PC-9 (cell line): ENCODE measurements at regions of chr4 and their contacts with region 1.

Region 1: GRCh38 chr4:110193822-110194761 is 4.3 kb downstream of the ELOVL6 start:
- DNase-seq: no peak
- H3K4me3 ChIP-seq: no peak overlapping the region
- H3K27ac ChIP-seq: no peak overlapping the region
- H3K4me1 ChIP-seq: no peaks in the 10 kb centered on the region
- H3K27me3 ChIP-seq: no peaks in the 10 kb centered on the region
- CTCF ChIP-seq: no peak

Region 2: GRCh38 chr4:110005461-110006056 is 188.5 kb before region 1 on chr4:
- CTCF ChIA-PET with region 1: interaction called, 4 read pairs
- POLR2A ChIA-PET with region 1: no interaction called
- intact Hi-C with region 1: loop called (anchors 10 kb)
- DNase-seq: peak in 1 of 2 experiments; percentile 47
- H3K4me3 ChIP-seq: no peak overlapping the region
- H3K27ac ChIP-seq: no peak overlapping the region
- H3K4me1 ChIP-seq: no peaks in the 10 kb centered on the region
- H3K27me3 ChIP-seq: no peaks in the 10 kb centered on the region
- CTCF ChIP-seq: peak; percentile 75

Region 3: GRCh38 chr4:110049951-110050925 is 143.9 kb before region 1 on chr4:
- CTCF ChIA-PET with region 1: no interaction called
- POLR2A ChIA-PET with region 1: no interaction called
- intact Hi-C with region 1: loop called (anchors 1 kb)
- DNase-seq: peak in 1 of 2 experiments; percentile 27
- H3K4me3 ChIP-seq: no peak overlapping the region
- H3K27ac ChIP-seq: no peak overlapping the region
- H3K4me1 ChIP-seq: no peaks in the 10 kb centered on the region
- H3K27me3 ChIP-seq: no peaks in the 10 kb centered on the region
- CTCF ChIP-seq: peak; percentile 80

Region 4: GRCh38 chr4:110165382-110166285 is 28.5 kb before region 1 on chr4:
- CTCF ChIA-PET with region 1: no interaction called
- POLR2A ChIA-PET with region 1: no interaction called
- intact Hi-C with region 1: loop called (anchors 2 kb)
- DNase-seq: peak in 1 of 2 experiments; percentile 86
- H3K4me3 ChIP-seq: no peak overlapping the region
- H3K27ac ChIP-seq: peak overlapping the region; percentile 98
- H3K4me1 ChIP-seq: peaks cover 55% of the 10 kb centered on the region
- H3K27me3 ChIP-seq: no peaks in the 10 kb centered on the region
- CTCF ChIP-seq: no peak

Region 5: DNA sequence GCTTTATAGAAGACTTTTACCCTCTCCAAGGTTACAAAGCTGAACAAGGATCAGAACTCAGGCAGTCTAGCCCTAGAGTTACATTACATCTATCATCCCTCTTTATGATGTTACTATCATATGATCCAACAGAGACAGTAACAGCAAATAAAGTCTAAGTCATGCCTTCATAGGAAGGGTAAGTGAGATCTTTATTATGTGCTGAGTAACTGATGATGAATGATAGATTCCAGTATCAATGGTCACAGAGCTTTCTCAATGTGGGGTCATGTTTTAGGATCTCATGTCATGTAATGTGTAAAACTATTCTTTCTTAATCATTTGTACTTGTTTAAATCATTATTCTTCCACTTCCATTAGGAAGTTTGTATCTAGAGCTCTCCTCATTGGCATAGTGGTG is 18.5 kb before region 1 on chr4:
- CTCF ChIA-PET with region 1: no interaction called
- POLR2A ChIA-PET with region 1: no interaction called
- intact Hi-C with region 1: no loop called
- DNase-seq: no peak
- H3K4me3 ChIP-seq: no peak overlapping the region
- H3K27ac ChIP-seq: no peak overlapping the region
- H3K4me1 ChIP-seq: peaks cover 26% of the 10 kb centered on the region
- H3K27me3 ChIP-seq: no peaks in the 10 kb centered on the region
- CTCF ChIP-seq: no peak

Region 6: DNA sequence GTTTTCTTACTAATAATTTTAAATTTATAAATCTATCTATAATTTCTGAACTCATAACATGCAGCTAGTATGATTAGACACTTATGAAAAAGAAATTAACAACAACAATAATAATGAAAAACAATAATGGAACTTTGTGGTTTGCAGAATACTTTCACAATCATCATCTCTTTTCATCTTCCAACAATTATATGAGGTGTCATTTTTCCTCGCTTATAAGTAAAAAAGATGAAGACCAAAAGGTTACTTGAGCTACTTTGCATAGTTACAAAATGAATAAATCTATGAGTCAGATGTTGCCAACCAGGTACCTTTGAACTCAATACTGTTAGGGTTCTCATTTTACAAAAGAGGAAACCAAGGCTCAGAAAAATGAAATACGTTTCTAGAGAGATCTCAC is 102.8 kb after region 1 on chr4:
- CTCF ChIA-PET with region 1: no interaction called
- POLR2A ChIA-PET with region 1: no interaction called
- intact Hi-C with region 1: loop called (anchors 10 kb)
- DNase-seq: peak in 1 of 2 experiments; percentile 62
- H3K4me3 ChIP-seq: no peak overlapping the region
- H3K27ac ChIP-seq: peak overlapping the region; percentile 38
- H3K4me1 ChIP-seq: peaks cover 15% of the 10 kb centered on the region
- H3K27me3 ChIP-seq: no peaks in the 10 kb centered on the region
- CTCF ChIP-seq: no peak

Region 7: GRCh38 chr4:110869862-110870572 is 675.9 kb after region 1 on chr4:
- CTCF ChIA-PET with region 1: no interaction called
- POLR2A ChIA-PET with region 1: no interaction called
- intact Hi-C with region 1: no loop called
- DNase-seq: no peak
- H3K4me3 ChIP-seq: no peak overlapping the region
- H3K27ac ChIP-seq: no peak overlapping the region
- H3K4me1 ChIP-seq: no peaks in the 10 kb centered on the region
- H3K27me3 ChIP-seq: no peaks in the 10 kb centered on the region
- CTCF ChIP-seq: no peak